Transverse colon (tissue), 4 donors: ENCODE measurements at regions of chr10 and their contacts with region 1.

Region 1: GRCh38 chr10:112721080-112721698 is 228.9 kb upstream of the TCF7L2 start:
- DNase-seq: no peak
- H3K4me3 ChIP-seq: no peak overlapping the region
- H3K27ac ChIP-seq: no peak overlapping the region
- H3K4me1 ChIP-seq: peaks cover 0 to 10% (median 5%) of the 10 kb centered on the region in 4 donors
- H3K27me3 ChIP-seq: no peaks in the 10 kb centered on the region
- CTCF ChIP-seq: peak; percentile 60 to 74 (median 68)
- EP300 ChIP-seq: no peak
- POLR2A ChIP-seq: no peak

Region 2: GRCh38 chr10:113126229-113127201 is 405.3 kb after region 1 on chr10:
- in situ Hi-C with region 1: loop called in 1 of 4 experiments (anchors 25 kb)
- intact Hi-C with region 1: loop called (anchors 5 kb)
- DNase-seq: peak; percentile 66
- H3K4me3 ChIP-seq: peak overlapping the region in 3 of 4 donors; percentile 19 to 26 (median 19)
- H3K27ac ChIP-seq: peak overlapping the region in 2 of 4 donors; percentile 5 to 27
- H3K4me1 ChIP-seq: peaks cover 3 to 21% (median 4%) of the 10 kb centered on the region in 4 donors
- H3K27me3 ChIP-seq: no peaks in the 10 kb centered on the region
- CTCF ChIP-seq: peak in 4 of 5 experiments; percentile 34 to 69 (median 61)
- EP300 ChIP-seq: no peak
- POLR2A ChIP-seq: no peak